Calu3 (cell line): ENCODE measurements at regions of chr6 and their contacts with region 1.

Region 1: DNA sequence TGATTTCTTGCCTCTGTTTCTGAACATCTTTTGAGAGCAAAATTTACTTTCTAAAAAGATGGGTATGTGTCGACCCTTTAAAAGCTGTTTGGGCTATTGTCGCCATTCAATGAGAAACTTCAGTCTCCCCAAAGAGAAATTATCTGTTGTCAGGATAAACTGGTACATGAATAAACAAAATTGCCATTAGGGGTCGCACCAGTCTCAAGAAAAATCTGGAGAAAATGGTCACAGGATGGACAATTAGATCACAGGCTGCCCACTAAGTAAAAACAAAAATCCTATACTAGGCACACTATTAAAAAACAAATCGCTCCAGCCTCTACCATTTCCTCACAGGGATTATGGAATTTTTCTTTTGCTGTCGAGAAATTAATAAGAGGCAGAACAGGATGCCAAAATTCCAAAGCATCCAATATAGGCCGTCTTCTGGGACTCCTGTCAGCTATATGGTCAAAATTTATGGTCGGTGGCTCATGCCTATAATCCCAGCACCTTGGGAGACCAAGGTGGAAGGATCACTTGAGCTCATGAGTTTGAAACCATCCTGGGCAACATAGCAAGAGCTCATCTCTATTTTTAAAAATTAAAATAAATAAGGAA is 5.5 kb upstream of the HLA-E start:
- DNase-seq: peak; percentile 70
- H3K4me3 Mint-ChIP-seq: no peak overlapping the region
- H3K27ac Mint-ChIP-seq: no peak overlapping the region
- H3K4me1 Mint-ChIP-seq: peaks cover 23% of the 10 kb centered on the region
- H3K27me3 Mint-ChIP-seq: peaks cover 62% of the 10 kb centered on the region
- CTCF ChIP-seq: peak; percentile 45

Region 2: DNA sequence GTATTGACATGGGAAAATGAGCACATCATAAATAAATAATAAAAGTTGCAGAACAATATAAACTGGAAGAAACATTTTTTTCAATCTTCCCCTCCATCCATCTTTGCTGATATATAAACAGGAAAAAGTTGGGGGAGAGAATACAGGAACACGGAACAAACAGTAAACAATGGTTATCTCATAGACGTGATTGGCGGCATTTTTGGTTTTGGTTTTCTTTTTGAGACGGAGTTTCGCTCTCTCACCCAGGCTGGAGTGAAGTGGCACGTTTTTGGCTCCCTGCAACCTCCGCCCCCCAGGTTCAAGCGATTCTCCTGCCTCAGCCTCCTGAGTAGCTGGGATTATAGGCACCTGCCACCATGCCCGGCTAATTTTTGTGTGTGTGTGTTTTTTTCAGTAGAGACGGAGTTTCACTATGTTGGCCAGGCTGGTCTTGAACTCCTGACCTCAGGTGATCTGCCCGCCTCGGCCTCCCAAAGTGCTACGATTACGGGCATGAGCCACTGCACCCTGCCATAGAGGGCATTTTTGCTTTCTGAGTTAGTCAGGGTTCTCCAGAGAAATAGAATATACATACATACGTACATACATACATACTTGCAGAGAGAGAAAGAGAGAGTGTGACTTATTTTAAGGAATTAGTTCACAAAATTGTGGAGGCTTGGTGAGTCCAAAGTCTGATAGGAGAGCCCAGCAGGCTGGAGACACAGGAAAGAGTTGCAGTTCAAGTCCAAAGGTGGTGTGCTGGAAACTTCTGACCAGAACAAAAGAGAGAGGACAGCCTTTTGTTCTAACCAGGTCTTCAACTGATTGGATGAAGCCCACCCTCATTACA is 49.9 kb after region 1 on chr6:
- CTCF ChIA-PET with region 1: interaction called, 26 read pairs
- intact Hi-C with region 1: loop called (anchors 1 kb)
- DNase-seq: no peak
- H3K4me3 Mint-ChIP-seq: no peak overlapping the region
- H3K27ac Mint-ChIP-seq: no peak overlapping the region
- H3K4me1 Mint-ChIP-seq: no peaks in the 10 kb centered on the region
- H3K27me3 Mint-ChIP-seq: no peaks in the 10 kb centered on the region
- CTCF ChIP-seq: no peak

Region 3: DNA sequence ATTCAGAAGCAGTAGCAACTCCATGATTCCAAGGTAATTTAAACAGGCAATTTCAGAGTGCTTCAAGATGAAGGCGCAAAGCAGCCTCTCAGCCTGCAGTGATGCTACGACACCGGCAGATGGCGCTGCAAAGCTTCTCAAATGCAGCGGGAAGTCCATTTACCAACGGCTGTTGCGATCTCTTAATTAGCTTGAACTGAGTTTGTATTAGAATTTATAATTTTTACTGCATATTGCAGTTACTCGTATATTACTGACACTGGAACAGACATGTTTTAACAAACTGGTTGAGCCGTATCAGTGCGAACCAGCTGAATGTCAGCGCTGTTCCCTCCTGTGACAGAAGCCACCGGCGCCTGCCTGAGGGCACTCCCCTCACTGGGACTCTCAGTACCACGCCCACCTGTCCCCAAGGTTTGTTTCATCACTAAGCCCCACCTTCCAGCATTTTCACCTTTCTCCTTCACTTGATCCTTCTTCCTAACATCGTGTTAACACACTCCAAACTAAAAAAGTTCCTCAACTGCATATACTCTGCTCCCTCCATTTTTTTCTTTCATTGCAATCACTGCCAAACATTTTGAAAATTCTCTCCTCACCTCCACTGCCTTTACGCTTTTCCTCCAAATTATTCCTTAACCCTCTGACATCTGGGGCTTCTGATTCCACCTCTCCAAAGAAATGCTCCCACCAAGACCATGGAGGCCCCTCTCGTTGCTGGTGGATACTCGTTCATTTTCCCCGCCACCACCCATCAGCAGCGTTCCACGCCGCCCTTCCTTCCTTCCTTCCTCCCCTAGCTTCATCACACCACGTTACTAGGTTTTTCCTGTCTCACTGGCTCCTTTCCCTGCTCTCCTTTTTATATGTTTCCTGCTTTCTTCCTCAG is 58.0 kb after region 1 on chr6:
- CTCF ChIA-PET with region 1: interaction called, 76 read pairs
- intact Hi-C with region 1: loop called (anchors 1 kb)
- DNase-seq: peak; percentile 80
- H3K4me3 Mint-ChIP-seq: peak overlapping the region; percentile 27
- H3K27ac Mint-ChIP-seq: peak overlapping the region; percentile 6
- H3K4me1 Mint-ChIP-seq: peaks cover 18% of the 10 kb centered on the region
- H3K27me3 Mint-ChIP-seq: no peaks in the 10 kb centered on the region
- CTCF ChIP-seq: peak; percentile 96

Region 4: DNA sequence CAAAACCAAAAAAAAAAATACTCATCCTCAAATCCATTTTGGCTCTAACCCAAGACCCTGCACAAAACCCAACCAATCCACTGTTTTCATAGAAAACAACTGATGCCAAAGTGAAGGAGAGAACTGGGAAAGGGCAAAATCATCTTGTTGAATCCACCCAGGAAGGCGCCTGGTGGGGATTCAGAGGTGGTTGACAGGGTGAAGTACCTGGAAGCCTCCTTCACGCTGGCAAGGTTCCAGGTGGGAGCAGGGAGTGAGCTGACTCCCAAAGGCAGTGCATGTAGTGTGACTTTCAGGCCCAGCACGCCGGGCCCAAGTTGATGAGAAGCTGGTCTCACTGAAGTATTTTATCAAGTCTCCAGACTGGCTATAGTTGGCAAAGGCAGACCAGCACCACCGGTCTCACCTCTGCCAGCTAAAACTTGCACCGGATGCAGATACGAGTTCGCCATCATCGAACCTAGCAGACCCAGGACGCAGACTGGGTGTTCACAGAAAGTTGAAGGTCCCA is 116.7 kb after region 1 on chr6:
- CTCF ChIA-PET with region 1: interaction called, 28 read pairs
- intact Hi-C with region 1: loop called (anchors 1 kb)
- DNase-seq: no peak
- H3K4me3 Mint-ChIP-seq: no peak overlapping the region
- H3K27ac Mint-ChIP-seq: peak overlapping the region; percentile 71
- H3K4me1 Mint-ChIP-seq: no peaks in the 10 kb centered on the region
- H3K27me3 Mint-ChIP-seq: no peaks in the 10 kb centered on the region
- CTCF ChIP-seq: no peak

Region 5: DNA sequence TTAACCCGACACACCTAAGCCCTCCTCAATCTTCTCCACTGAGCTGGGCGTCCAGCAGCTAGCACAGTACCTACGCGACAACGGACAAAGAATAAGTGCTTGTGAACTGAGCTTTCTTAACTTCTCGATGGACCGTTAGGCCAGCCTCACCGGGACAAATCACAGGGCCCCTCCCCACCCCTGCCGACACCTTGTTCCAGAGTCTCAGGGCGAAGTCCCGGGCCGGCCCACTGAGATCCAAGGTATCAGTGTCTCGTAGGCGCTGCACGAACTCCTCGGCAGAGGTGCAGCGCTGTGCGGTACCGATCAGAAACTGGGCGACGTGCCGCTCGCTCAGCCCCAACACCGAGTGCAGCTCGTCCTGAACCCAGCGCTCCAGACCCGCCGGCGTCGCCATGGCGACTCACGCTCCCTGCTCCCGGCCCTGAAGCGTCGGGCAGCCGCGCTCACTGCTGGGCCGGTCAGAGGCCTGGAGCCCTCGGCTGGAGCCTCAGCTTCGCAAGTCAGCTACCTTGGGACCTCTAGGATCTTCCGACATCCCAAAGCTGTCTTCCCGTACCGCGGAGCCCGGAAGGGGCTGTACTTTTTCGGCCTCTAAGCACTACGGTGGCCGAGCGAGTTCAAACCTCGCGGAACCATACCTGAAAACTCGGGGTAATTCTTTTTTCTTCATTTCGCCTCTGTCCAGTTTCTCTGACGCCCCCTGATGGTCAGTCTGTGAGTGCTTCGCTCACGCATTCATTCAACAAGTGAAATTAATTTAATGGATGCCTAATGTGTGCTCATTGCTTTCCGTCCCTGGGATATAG is 188.9 kb after region 1 on chr6 and contains the start of gene DHX16:
- CTCF ChIA-PET with region 1: interaction called, 3 read pairs
- intact Hi-C with region 1: loop called (anchors 2 kb)
- DNase-seq: peak; percentile 98
- H3K4me3 Mint-ChIP-seq: peak within 1 kb of the TSS; percentile 84
- H3K27ac Mint-ChIP-seq: peak within 1 kb of the TSS; percentile 18
- H3K4me1 Mint-ChIP-seq: peaks cover 29% of the 10 kb centered on the region
- H3K27me3 Mint-ChIP-seq: no peaks in the 10 kb centered on the region
- CTCF ChIP-seq: peak; percentile 59
- total RNA-seq, gene DHX16: 51.6 and 55.6 TPM in 2 replicates